ENCODE measurements at regions of chr16 and their contacts with region 1.

Region 1: GRCh38 chr16:4402439-4403132 is 13.8 kb downstream of the CORO7 start:
- DNase-seq: no peak
- H3K4me3 ChIP-seq: no peak overlapping the region
- H3K27me3 ChIP-seq: no peaks in the 10 kb centered on the region
- CTCF ChIP-seq: peak; percentile 88

Region 2: GRCh38 chr16:4200000-4200780 is 202.4 kb before region 1 on chr16:
- CTCF ChIA-PET with region 1: interaction called, 10 read pairs
- POLR2A ChIA-PET with region 1: no interaction called
- DNase-seq: peak; percentile 7
- H3K4me3 ChIP-seq: no peak overlapping the region
- H3K27me3 ChIP-seq: no peaks in the 10 kb centered on the region
- CTCF ChIP-seq: peak; percentile 77

Region 3: DNA sequence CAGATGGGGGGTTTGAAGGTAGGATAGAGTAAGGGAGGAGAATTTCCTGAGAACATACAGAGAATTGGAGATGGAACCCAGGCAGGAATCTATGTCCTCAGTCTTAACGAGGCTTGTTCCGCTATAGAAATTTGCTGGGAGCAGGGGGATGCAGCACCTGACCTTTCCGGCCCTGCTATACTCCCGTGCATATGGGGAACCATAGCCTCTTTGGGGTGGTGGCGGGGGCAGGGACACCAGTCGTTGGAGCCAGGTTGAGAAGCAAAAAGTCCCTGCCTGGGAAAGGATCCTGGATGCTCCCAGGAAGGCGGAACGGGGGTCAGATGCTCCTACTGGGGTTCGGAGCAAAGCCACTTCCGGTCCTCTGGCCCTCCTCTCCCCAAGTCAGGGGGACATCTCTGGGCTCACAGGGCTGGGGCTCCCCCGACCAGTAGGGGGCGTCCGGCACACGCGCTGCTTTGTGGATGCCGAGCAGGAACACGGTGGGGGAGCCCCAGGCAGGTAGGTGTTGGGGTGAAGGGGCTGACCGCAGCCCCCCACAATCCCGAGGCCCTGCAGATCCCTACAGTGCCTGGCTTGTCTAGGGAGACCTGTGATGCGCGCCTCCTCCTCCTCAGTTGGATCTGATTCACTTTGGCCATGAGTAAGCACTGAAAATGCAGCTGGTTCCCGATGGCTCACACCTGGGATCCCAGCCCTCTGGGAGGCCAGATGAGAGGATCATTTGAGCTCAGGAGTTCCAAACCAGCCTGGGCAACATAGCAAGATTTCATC is 114.3 kb before region 1 on chr16:
- CTCF ChIA-PET with region 1: interaction called, 13 read pairs
- POLR2A ChIA-PET with region 1: no interaction called
- DNase-seq: no peak
- H3K4me3 ChIP-seq: no peak overlapping the region
- H3K27me3 ChIP-seq: no peaks in the 10 kb centered on the region
- CTCF ChIP-seq: peak; percentile 99

Region 4: DNA sequence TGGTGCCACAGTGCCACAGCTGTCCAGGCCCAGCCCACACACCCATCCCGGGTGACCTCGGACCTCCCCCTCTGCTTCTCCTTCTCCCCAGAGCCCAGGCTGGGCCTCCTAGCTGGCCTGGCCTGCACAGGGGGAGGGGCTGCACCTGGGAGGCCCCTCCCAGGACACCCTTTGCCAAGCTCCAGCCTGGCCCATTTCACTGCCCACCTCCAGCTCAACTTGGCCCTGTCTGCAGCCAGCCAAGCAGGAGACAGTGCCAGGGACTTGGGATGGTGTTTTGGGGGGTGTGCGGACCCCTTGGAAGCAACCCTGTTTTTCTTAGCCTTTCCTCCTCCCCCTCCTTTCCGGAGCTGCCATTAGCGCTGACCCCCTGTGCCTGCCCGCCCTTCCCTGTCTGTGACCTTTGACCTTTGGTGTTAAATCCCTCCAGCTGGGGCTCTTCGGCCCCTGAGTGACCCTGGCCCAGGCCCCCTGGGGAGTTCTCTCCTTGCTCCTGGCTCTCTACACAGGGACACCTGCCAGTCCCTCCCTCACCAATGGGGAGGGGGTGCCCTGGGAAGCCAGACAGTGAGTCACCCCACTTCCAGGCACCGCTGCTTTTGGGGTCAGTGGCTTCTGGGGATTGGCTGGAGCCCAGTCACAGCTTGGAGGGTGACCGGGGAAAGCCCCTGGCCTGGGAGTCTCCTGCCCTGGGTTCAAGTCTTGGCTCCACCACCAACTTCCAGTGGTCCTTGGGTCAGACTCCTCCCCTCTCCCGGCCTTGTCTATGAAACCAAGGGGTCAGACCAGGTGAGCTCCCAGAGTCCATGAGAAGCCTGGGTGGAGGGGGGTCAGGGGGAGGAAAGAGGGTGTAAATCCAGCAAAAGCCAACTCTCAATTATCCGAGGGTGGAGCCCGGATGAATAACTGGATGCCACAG is 84.8 kb before region 1 on chr16:
- CTCF ChIA-PET with region 1: no interaction called
- POLR2A ChIA-PET with region 1: no interaction called
- DNase-seq: no peak
- H3K4me3 ChIP-seq: peak overlapping the region; percentile 91
- H3K27me3 ChIP-seq: no peaks in the 10 kb centered on the region
- CTCF ChIP-seq: no peak

Region 5: GRCh38 chr16:4330277-4330874 is 72.2 kb before region 1 on chr16:
- CTCF ChIA-PET with region 1: interaction called, 22 read pairs
- POLR2A ChIA-PET with region 1: no interaction called
- DNase-seq: no peak
- H3K4me3 ChIP-seq: no peak overlapping the region
- H3K27me3 ChIP-seq: no peaks in the 10 kb centered on the region
- CTCF ChIP-seq: peak; percentile 98

Region 6: GRCh38 chr16:4344983-4345835 is 57.4 kb before region 1 on chr16:
- CTCF ChIA-PET with region 1: interaction called, 109 read pairs
- POLR2A ChIA-PET with region 1: no interaction called
- DNase-seq: no peak
- H3K4me3 ChIP-seq: no peak overlapping the region
- H3K27me3 ChIP-seq: no peaks in the 10 kb centered on the region
- CTCF ChIP-seq: no peak

Region 7: GRCh38 chr16:4358831-4359561 is 43.6 kb before region 1 on chr16:
- CTCF ChIA-PET with region 1: interaction called, 205 read pairs
- POLR2A ChIA-PET with region 1: no interaction called
- DNase-seq: no peak
- H3K4me3 ChIP-seq: no peak overlapping the region
- H3K27me3 ChIP-seq: no peaks in the 10 kb centered on the region
- CTCF ChIP-seq: peak; percentile 96

Region 8: DNA sequence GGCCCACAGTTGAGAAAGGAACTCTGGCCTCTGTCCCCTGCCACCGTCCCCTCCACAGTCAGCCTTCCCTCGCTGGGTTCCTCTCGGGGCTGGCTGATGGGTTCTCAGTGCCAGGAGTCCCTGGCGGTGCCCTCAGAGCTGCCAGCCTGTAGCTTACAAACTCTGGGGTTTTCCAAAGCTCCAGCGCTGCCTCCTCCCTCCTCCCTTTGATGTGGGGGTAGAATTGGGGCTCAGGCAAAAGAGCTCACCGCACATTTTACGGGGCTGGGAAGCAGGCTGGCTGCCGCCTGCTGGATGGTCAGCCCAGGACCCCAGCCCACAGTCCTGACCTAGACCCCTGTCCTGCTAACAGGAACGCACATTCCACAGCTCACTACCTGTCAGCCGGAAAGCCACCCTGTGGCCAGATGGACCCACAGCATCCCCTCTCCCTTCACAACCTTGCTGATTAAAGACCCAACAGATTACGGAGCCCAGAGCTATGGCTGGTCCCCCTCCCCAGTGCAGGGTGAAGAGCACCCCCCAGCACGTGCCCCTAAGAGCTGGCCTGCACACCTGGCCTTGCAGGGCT is 24.9 kb before region 1 on chr16:
- CTCF ChIA-PET with region 1: interaction called, 48 read pairs
- POLR2A ChIA-PET with region 1: no interaction called
- DNase-seq: no peak
- H3K4me3 ChIP-seq: no peak overlapping the region
- H3K27me3 ChIP-seq: no peaks in the 10 kb centered on the region
- CTCF ChIP-seq: no peak

Region 9: DNA sequence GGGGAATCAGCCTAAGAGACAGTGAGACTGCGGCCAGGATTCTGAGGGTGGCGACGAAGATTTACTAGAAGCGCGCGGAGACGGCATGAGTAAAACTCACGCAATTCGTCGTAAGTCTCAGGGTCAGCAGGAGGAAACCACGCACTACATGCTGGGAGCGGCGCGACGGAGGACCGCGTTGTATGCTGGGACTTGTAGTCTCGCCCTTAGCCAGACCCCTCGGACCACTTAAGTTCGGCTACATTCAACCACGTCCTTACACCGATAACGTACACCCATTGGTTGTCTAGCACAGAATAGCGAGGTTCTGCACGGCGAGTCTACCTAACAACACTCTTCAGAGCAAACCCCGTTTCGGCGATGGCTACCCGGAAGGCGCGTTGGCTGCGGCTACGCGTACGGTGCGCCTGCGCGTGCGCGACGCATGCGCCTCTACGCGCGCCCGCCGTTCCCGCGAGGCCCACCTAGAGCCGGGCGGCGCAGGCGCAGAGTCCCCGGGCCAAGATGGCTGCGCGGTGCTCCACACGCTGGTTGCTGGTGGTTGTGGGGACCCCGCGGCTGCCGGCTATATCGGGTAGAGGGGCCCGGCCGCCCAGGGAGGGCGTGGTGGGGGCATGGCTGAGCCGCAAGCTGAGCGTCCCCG is 22.9 kb after region 1 on chr16 and contains the start of gene DNAJA3:
- CTCF ChIA-PET with region 1: no interaction called
- POLR2A ChIA-PET with region 1: no interaction called
- DNase-seq: peak; percentile 77
- H3K4me3 ChIP-seq: peak within 1 kb of the TSS; percentile 59
- H3K27me3 ChIP-seq: no peaks in the 10 kb centered on the region
- CTCF ChIP-seq: no peak
- polyA plus RNA-seq, gene DNAJA3: 35.9 and 48.8 TPM in 2 replicates

Measured in BJ (cell line).